GM12878 (cell line): ENCODE measurements at regions of chr1 and their contacts with region 1.

Region 1: GRCh38 chr1:154019940-154020339 is 29.4 kb downstream of the RPS27 start:
- DNase-seq: no peak
- ATAC-seq: no peak
- H3K4me3 ChIP-seq: no peak overlapping the region
- H3K27ac ChIP-seq: no peak overlapping the region
- H3K4me1 ChIP-seq: no peaks in the 10 kb centered on the region
- H3K27me3 ChIP-seq: no peaks in the 10 kb centered on the region
- CTCF ChIP-seq: no peak
- EP300 ChIP-seq: no peak
- POLR2A ChIP-seq: no peak
- RAD21 ChIP-seq: no peak

Region 2: GRCh38 chr1:154075746-154076145 is 55.8 kb after region 1 on chr1:
- CTCF ChIA-PET with region 1: interaction called, 3 read pairs
- POLR2A ChIA-PET with region 1: interaction called, 4 read pairs
- RAD21 ChIA-PET with region 1: no interaction called
- SMC1A ChIA-PET with region 1: no interaction called
- in situ Hi-C with region 1: no loop called
- intact Hi-C with region 1: loop called (anchors 10 kb)
- DNase-seq: no peak
- ATAC-seq: no peak
- H3K4me3 ChIP-seq: no peak overlapping the region
- H3K27ac ChIP-seq: no peak overlapping the region
- H3K4me1 ChIP-seq: no peaks in the 10 kb centered on the region
- H3K27me3 ChIP-seq: no peaks in the 10 kb centered on the region
- CTCF ChIP-seq: no peak
- EP300 ChIP-seq: no peak
- POLR2A ChIP-seq: no peak
- RAD21 ChIP-seq: no peak